A673 (cell line): ENCODE measurements at regions of chr20 and their contacts with region 1.

Region 1: DNA sequence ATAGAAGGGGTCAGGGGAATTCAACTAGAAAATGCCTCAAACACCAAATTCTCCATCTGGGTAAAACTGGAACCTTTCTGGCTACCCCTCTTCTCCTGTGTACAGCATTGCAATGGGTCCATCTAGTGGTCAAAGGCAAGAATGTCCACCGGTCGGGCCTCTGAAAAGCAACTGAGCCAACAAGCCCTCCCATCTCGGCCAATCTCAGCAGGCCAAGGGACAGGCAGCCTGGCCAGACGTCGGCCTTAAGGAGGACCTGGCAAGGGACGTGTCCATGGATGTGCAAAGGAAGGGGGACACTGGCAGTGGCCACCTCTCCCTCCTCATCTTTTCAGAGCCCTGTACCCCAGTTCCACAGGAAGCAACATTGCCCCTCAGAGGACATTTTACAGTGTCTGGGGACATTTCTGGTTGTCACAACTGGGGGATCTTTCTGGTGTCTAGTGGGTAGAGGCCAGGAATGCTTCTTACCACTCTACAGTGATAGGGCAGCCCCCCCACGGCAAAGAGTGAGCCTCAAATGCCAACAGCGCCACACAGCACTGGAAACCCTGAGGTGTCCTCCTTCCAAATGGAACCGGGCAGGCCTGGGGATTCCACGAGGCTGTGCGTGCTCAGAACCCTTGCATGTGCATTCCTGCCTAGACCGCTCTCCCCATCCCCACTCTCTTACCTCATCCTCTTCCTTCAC is 99.8 kb upstream of the FOXA2 start:
- DNase-seq: peak; percentile 72
- H3K4me3 ChIP-seq: no peak overlapping the region
- H3K27ac ChIP-seq: no peak overlapping the region
- H3K4me1 ChIP-seq: no peaks in the 10 kb centered on the region
- H3K27me3 ChIP-seq: peaks cover 5% of the 10 kb centered on the region
- CTCF ChIP-seq: peak; percentile 80

Region 2: DNA sequence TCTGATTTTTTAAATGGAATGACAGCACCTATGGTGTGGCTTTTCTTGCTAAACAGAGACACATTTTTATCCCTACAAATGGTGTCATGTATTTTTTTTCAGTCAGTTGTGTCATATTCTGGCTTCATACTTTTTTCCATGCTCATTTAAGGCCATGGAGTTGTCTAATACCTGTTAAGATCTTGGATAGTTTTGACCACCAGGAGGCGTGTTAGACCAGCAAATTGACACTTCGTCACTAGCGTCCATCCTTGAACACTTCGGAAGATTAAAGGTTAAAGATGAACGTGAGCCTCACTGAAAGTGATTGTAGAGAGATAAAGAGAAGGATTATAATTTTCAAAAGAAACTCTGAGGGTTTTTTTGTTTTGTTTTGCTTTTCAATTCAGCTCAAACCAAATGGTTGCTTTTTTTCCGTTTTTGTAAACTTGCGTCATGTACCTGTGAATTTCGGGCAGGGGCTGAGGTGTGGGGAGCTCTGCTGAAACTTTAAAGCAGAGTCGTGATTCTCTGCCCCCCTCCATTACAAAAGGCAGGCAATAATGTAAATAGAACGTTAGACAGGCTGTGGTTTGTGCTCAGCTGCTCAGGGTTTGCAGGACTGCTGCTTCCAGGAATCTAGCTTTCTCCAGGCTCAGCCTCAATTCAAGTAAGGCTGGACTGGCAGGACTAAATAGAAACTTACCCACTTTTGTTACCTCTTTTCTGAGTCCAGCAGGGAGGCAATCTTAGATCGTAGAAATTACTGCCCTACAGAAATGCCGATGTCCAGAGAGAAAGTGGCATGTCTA is 344.9 kb before region 1 on chr20:
- CTCF ChIA-PET with region 1: interaction called, 3 read pairs
- POLR2A ChIA-PET with region 1: no interaction called
- intact Hi-C with region 1: loop called (anchors 1 kb)
- DNase-seq: peak; percentile 68
- H3K4me3 ChIP-seq: no peak overlapping the region
- H3K27ac ChIP-seq: no peak overlapping the region
- H3K4me1 ChIP-seq: no peaks in the 10 kb centered on the region
- H3K27me3 ChIP-seq: peaks cover 11% of the 10 kb centered on the region
- CTCF ChIP-seq: peak; percentile 77

Region 3: DNA sequence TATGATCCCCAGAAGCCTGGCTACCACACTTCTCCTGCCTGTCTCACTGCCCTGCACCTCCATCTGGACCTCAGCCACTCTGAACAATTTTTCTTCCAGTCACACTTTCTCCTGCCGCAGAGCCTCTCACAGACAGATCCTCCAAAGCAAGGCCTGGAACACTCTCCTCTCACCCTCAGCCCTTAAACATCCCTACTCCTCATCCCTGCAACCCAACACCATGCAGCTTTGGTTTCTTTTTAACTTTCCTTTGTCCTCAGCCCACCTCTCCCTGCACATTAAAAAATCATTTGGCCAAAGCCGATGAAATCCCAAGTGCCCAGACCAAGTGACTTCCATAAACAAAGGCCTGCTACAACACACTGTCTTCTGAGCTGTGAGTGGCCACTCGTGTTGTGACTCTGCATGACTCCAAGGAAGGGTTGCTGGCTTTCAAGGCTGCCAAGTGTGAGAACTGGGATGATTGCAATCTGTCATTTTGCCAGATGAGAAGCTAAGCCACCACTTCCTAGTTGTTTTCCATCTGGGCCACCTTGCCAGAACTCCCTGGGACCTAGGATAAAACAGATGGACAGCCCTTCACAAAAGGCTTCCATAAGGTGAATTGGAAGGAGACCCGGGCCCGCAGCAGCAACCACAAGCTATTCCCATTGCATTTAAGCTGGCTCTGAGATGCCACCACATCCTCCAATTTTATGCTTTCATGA is 206.5 kb after region 1 on chr20:
- CTCF ChIA-PET with region 1: no interaction called
- POLR2A ChIA-PET with region 1: no interaction called
- intact Hi-C with region 1: no loop called
- DNase-seq: no peak
- H3K4me3 ChIP-seq: no peak overlapping the region
- H3K27ac ChIP-seq: no peak overlapping the region
- H3K4me1 ChIP-seq: no peaks in the 10 kb centered on the region
- H3K27me3 ChIP-seq: no peaks in the 10 kb centered on the region
- CTCF ChIP-seq: no peak